HCT116 (cell line): ENCODE measurements at regions of chr3 and their contacts with region 1.

Region 1: GRCh38 chr3:36792342-36792741 is 28.0 kb upstream of the DCLK3 start:
- DNase-seq: peak; percentile 24
- ATAC-seq: peak; percentile 96
- H3K4me3 ChIP-seq: no peak overlapping the region
- H3K27ac ChIP-seq: no peak overlapping the region
- H3K4me1 ChIP-seq: no peaks in the 10 kb centered on the region
- H3K27me3 ChIP-seq: peaks cover 34% of the 10 kb centered on the region
- CTCF ChIP-seq: peak; percentile 55 to 60 (median 59); a peak in 5 of 6 replicates
- POLR2A ChIP-seq: no peak
- RAD21 ChIP-seq: peak; percentile 75

Region 2: DNA sequence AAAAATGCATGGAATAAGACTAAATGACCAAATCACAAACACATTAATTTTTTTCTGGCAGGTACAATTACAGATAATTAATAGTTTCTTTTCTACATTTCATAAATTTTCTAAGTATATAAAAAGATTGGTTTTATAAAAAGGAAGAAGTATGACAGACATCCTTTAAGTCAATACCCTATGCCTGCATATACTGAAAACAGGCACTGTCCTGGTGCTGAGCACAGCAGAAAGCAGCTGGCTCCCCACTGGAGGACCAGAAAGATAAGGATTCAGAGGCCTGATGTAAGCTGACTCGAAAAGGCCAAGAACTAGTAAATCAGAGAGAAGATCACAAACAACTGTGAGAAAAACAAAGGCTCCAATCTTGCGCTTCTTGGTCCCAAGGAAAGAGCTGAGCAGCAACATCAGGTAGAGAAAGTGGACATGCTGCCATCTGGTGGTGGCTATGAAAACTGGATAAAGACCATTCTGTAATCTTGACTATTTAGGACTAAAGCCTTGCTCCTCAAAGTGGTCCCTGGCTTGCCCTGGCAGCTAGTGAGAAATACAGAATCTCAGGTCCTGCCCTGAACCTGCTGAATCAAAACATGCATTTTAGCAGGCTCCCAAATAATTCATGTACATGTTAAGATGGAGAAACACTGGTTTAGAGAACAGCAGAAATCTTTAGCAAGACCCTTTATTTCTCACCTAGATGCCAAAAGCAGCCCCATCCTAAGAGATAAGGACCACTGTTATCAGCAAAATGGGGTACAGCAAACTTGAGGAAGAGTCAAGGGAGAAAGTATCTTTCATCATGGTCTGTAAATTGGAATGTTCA is 76.5 kb after region 1 on chr3:
- CTCF ChIA-PET with region 1: interaction called, 38 read pairs
- POLR2A ChIA-PET with region 1: no interaction called
- RAD21 ChIA-PET with region 1: no interaction called
- intact Hi-C with region 1: loop called (anchors 1 kb)
- DNase-seq: peak; percentile 48
- ATAC-seq: peak; percentile 96
- H3K4me3 ChIP-seq: no peak overlapping the region
- H3K27ac ChIP-seq: no peak overlapping the region
- H3K4me1 ChIP-seq: no peaks in the 10 kb centered on the region
- H3K27me3 ChIP-seq: peaks cover 28% of the 10 kb centered on the region
- CTCF ChIP-seq: peak; percentile 60 to 84 (median 68)
- POLR2A ChIP-seq: no peak
- RAD21 ChIP-seq: peak; percentile 76